ENCODE measurements at regions of chr10 and their contacts with region 1.

Region 1: DNA sequence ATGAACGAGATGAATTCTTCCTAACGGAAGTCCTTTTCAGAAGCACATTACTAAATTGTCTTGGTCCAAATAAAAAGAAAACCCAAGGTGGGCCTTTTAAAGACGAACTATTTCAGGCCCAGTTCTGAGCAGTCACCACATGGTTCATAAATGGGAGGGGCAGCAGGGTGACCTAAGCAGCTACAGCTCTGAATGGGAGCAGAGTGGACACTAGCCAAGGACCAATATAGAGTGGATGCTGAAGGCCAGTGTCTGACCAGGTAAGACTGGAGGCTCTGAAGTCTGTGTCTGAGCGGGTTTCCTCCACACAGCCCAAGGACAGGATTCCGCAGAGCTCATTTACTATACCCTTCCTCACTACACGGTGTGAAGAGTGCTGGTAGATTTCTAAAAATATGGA is 159.1 kb downstream of the TMEM26 start:
- DNase-seq: no peak
- H3K4me3 ChIP-seq: no peak overlapping the region
- H3K27ac ChIP-seq: no peak overlapping the region
- H3K4me1 ChIP-seq: no peaks in the 10 kb centered on the region
- H3K27me3 ChIP-seq: no peaks in the 10 kb centered on the region
- CTCF ChIP-seq: no peak

Region 2: DNA sequence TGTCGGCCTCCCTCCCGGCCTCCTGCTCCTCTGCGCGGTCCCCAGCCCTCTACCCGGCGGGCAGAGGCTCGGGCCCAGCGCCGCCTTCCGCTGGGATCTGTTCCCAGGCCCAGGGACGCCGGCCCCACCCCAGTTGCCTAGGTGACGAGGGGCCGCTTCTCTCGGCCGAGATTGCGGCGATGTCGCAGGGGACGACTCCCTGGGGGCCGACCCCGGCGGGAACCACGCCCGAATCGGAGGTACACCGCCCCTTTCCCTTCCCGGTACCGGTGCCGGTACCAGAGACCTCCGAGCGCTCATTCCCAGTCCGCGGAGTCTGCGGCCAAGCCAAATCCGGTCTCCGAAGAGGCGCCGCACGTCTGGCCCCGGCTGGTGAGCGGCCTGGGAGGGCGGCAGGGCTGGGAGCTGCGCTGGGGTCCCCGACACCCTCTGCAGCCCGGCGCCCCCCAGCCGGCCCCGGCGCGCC is 368.7 kb after region 1 on chr10 and contains the start of gene CABCOCO1:
- CTCF ChIA-PET with region 1: no interaction called
- POLR2A ChIA-PET with region 1: no interaction called
- intact Hi-C with region 1: loop called (anchors 10 kb)
- DNase-seq: peak; percentile 84
- H3K4me3 ChIP-seq: peak within 1 kb of the TSS; percentile 61
- H3K27ac ChIP-seq: no peak within 1 kb of the TSS
- H3K4me1 ChIP-seq: peaks cover 11% of the 10 kb centered on the region
- H3K27me3 ChIP-seq: no peaks in the 10 kb centered on the region
- CTCF ChIP-seq: peak; percentile 40; the same call in 1 of the 2 replicates
- total RNA-seq, gene CABCOCO1: 0.28 TPM in 1 of 2 replicates, not detected in the other

Measured in A673 (cell line).